WTC11 (cell line): ENCODE measurements at regions of chr5 and their contacts with region 1.

Region 1: DNA sequence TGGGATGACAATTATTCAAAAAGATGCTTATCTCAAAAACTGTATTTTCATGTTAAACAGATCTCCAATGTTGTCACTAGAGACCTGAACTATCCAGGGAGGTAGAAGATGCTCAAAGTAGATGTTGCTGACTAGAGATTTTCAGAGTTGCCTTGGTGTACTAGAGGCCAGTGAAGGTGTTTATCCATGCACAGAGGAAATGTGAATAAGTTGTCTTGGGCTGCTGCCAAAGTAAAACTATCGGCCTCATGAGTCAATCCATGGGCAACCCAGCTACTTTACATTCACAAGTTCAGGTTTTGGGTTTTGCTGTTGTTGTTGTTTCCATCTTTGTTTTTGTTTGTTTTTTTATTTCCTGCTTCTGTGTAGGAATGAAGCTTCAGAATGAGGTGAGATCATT is 141.1 kb upstream of the RANBP3L start:
- DNase-seq: no peak
- ATAC-seq: no peak
- H3K4me3 Mint-ChIP-seq: no peak overlapping the region
- H3K27ac Mint-ChIP-seq: peak overlapping the region; percentile 87
- H3K4me1 Mint-ChIP-seq: peaks cover 47% of the 10 kb centered on the region
- H3K27me3 Mint-ChIP-seq: no peaks in the 10 kb centered on the region; the same call in 1 of the 2 replicates
- CTCF ChIP-seq: no peak

Region 2: GRCh38 chr5:36147681-36148080 is 295.1 kb before region 1 on chr5:
- CTCF ChIA-PET with region 1: no interaction called
- POLR2A ChIA-PET with region 1: no interaction called
- DNase-seq: no peak
- ATAC-seq: no peak
- H3K4me3 Mint-ChIP-seq: no peak overlapping the region
- H3K27ac Mint-ChIP-seq: no peak overlapping the region
- H3K4me1 Mint-ChIP-seq: peaks cover 8% of the 10 kb centered on the region
- H3K27me3 Mint-ChIP-seq: no peaks in the 10 kb centered on the region
- CTCF ChIP-seq: no peak

Region 3: DNA sequence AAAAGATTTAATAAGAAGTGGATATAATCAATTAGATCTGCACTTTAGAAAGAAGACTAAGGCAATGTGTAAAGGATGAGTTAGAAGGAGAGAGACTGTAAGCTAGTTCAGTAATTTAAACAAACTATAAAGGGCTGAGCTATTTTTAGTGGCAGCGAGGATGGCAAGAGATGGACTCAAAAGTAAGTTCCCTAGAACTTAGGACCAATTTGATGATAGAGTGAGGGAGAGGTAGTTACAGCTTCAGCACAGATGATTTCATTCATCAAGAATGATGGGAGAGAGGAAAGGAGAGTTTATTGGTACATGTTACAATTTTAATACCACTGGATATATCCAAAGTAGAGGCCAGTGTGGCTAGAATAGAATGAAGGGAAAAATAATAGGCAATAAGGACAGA is 220.2 kb before region 1 on chr5:
- CTCF ChIA-PET with region 1: no interaction called
- POLR2A ChIA-PET with region 1: no interaction called
- DNase-seq: no peak
- ATAC-seq: no peak
- H3K4me3 Mint-ChIP-seq: no peak overlapping the region
- H3K27ac Mint-ChIP-seq: no peak overlapping the region
- H3K4me1 Mint-ChIP-seq: no peaks in the 10 kb centered on the region
- H3K27me3 Mint-ChIP-seq: no peaks in the 10 kb centered on the region
- CTCF ChIP-seq: no peak

Region 4: GRCh38 chr5:36403632-36404311 is 39.0 kb before region 1 on chr5:
- CTCF ChIA-PET with region 1: no interaction called
- POLR2A ChIA-PET with region 1: no interaction called
- DNase-seq: no peak
- ATAC-seq: no peak
- H3K4me3 Mint-ChIP-seq: no peak overlapping the region
- H3K27ac Mint-ChIP-seq: no peak overlapping the region
- H3K4me1 Mint-ChIP-seq: peaks cover 5% of the 10 kb centered on the region
- H3K27me3 Mint-ChIP-seq: peaks cover 4% of the 10 kb centered on the region; the same call in 1 of the 2 replicates
- CTCF ChIP-seq: no peak

Region 5: GRCh38 chr5:36459176-36460135 is 16.7 kb after region 1 on chr5:
- CTCF ChIA-PET with region 1: interaction called, 13 read pairs
- POLR2A ChIA-PET with region 1: no interaction called
- DNase-seq: no peak
- ATAC-seq: peak; percentile 98
- H3K4me3 Mint-ChIP-seq: no peak overlapping the region
- H3K27ac Mint-ChIP-seq: no peak overlapping the region
- H3K4me1 Mint-ChIP-seq: peaks cover 7% of the 10 kb centered on the region; the same call in 1 of the 2 replicates
- H3K27me3 Mint-ChIP-seq: no peaks in the 10 kb centered on the region
- CTCF ChIP-seq: peak; percentile 58; the same call in 1 of the 2 replicates

Region 6: GRCh38 chr5:36724467-36725332 is 281.9 kb after region 1 on chr5:
- CTCF ChIA-PET with region 1: no interaction called
- POLR2A ChIA-PET with region 1: no interaction called
- DNase-seq: no peak
- ATAC-seq: peak; percentile 85
- H3K4me3 Mint-ChIP-seq: no peak overlapping the region
- H3K27ac Mint-ChIP-seq: no peak overlapping the region
- H3K4me1 Mint-ChIP-seq: peaks cover 8% of the 10 kb centered on the region
- H3K27me3 Mint-ChIP-seq: no peaks in the 10 kb centered on the region
- CTCF ChIP-seq: no peak